ENCODE measurements at regions of chr7 and their contacts with region 1.

Region 1: GRCh38 chr7:5248201-5248885 is 34.4 kb upstream of the SLC29A4 start:
- DNase-seq: no peak
- H3K4me3 ChIP-seq: no peak overlapping the region
- H3K27ac ChIP-seq: peak overlapping the region; percentile 61
- H3K4me1 ChIP-seq: no peaks in the 10 kb centered on the region
- H3K27me3 ChIP-seq: no peaks in the 10 kb centered on the region
- CTCF ChIP-seq: no peak
- POLR2A ChIP-seq: no peak

Region 2: DNA sequence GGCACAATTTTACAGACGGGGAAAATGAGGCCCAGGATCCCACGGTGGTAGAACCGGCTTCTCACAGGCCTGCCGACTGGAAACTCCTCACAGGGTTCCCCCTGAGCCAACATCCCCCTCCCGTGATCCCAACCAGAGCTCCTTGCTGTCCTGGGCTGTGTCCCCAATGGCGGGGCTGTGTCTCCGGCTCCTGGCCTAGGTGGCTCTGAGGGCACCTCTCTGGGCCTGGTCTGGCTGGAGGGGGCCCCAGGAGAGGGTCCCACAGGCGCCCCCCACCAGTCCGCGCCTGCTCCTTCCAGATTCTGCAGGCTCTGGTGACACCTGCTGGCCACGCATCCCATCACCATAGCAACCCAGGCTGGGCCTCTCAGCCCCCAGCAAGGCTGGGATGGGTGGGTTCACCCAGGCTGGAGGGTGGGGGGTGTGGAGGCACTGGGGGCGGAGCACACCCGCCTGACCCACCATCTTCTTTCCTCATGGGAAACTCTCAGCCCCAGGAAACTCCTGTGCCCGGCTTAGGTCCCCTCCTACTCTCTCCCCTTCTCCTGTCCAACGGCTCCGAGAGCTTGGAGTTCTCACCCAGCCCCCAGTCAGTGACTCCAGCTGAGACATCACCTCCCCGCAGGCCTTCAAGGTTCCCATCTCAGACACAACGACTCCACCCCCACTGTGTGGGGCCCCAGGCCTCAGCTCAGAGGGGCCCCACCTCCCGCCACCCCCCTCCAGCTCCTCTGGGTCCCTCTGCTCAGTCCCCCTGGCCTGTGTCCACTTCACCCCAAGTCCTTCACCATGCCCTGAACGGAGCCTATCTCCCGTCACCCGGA is 202.4 kb after region 1 on chr7:
- intact Hi-C with region 1: loop called (anchors 10 kb)
- DNase-seq: no peak
- H3K4me3 ChIP-seq: no peak overlapping the region
- H3K27ac ChIP-seq: no peak overlapping the region
- H3K4me1 ChIP-seq: peaks cover 16% of the 10 kb centered on the region
- H3K27me3 ChIP-seq: no peaks in the 10 kb centered on the region
- CTCF ChIP-seq: peak; percentile 50 to 62 (median 51)
- POLR2A ChIP-seq: no peak

Measured in vagina (tissue), 2 donors.